ENCODE measurements at regions of chr5 and their contacts with region 1.

Region 1: DNA sequence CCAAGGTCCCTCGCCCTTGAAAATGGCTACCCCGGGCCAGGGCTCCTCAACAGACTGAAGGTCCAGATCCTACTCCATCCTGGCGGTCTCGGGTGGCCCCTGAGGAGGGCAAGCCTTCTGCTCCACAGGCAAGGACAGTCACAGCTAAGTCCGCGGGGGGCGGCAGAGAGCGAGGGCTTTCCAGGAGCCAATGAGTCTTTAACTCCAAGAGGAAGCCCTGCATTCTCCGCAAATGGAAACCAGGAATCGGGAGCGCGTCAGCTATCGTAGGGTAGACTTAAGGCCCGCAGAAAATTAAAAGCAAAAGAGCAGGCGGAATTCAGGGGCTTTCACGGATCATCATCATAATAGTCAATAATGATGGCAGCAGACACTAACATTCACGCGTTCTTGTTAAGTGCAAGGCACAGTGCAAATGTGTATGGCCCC is 87.8 kb upstream of the TNFAIP8 start:
- DNase-seq: peak; percentile 80 to 98
- H3K4me3 ChIP-seq: peak overlapping the region; percentile 84 to 87
- H3K27ac ChIP-seq: peak overlapping the region; percentile 93 to 96
- H3K4me1 ChIP-seq: peaks cover 0 to 15% of the 10 kb centered on the region in 2 donors
- H3K27me3 ChIP-seq: no peaks in the 10 kb centered on the region
- CTCF ChIP-seq: peak in 2 of 3 experiments; percentile 42 to 68

Region 2: GRCh38 chr5:119070828-119071572 is 197.0 kb before region 1 on chr5 and contains the start of gene DMXL1:
- intact Hi-C with region 1: loop called (anchors 2 kb)
- DNase-seq: peak; percentile 99 to 100
- H3K4me3 ChIP-seq: peak within 1 kb of the TSS; percentile 69 to 97
- H3K27ac ChIP-seq: peak within 1 kb of the TSS; percentile 96 to 99
- H3K4me1 ChIP-seq: peaks cover 0 to 26% of the 10 kb centered on the region in 2 donors
- H3K27me3 ChIP-seq: no peaks in the 10 kb centered on the region
- CTCF ChIP-seq: no peak
- total RNA-seq, gene DMXL1: 136 TPM

Region 3: GRCh38 chr5:119302916-119303897 is 35.2 kb after region 1 on chr5:
- intact Hi-C with region 1: loop called (anchors 1 kb)
- DNase-seq: peak in 1 of 2 donors; percentile 80
- H3K4me3 ChIP-seq: no peak overlapping the region
- H3K27ac ChIP-seq: peak overlapping the region; percentile 44 to 78
- H3K4me1 ChIP-seq: peaks cover 3 to 24% of the 10 kb centered on the region in 2 donors
- H3K27me3 ChIP-seq: no peaks in the 10 kb centered on the region
- CTCF ChIP-seq: no peak

Region 4: DNA sequence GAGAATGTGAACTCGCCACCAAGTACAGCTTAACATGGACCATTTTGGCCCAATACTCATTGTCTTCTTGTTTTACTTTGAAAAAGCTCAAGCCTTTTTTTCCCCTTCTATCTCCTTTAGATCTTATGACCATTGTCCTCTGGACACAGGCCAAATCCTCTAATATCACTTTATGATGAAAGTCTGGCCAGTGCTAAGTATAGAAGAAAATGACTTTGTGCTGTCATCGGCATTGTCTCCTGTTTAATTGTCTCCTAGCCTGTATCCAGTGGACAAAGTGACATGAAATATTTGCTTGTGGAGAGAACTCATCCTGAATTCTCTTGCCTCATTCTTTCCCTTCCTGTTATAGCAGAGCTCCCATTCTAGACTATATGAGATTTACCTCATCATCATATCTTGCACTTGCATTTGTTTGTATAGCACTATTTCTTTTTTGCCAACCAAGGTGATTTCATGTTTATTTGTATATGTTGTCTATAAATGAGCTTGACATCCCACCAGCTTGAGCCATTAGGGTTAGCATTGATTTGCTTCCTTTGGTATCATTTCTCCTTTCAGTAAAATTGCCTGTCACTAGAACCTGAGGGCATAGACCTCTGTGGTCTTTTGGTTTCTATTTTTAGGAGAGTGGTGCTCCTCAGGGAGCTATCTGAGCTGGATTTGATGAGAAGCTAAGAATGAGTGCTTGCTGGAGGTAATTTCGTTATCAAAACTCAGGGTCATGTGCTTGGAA is 69.0 kb after region 1 on chr5:
- intact Hi-C with region 1: loop called (anchors 1 kb)
- DNase-seq: no peak
- H3K4me3 ChIP-seq: no peak overlapping the region
- H3K27ac ChIP-seq: no peak overlapping the region
- H3K4me1 ChIP-seq: peaks cover 0 to 2% of the 10 kb centered on the region in 2 donors
- H3K27me3 ChIP-seq: no peaks in the 10 kb centered on the region
- CTCF ChIP-seq: no peak

Region 5: GRCh38 chr5:119411935-119412602 is 144.1 kb after region 1 on chr5:
- intact Hi-C with region 1: loop called (anchors 2 kb)
- DNase-seq: peak in 1 of 2 donors; percentile 76
- H3K4me3 ChIP-seq: peak overlapping the region; percentile 50 to 67
- H3K27ac ChIP-seq: peak overlapping the region; percentile 72 to 83
- H3K4me1 ChIP-seq: no peaks in the 10 kb centered on the region
- H3K27me3 ChIP-seq: no peaks in the 10 kb centered on the region
- CTCF ChIP-seq: peak; percentile 82 to 91 (median 86)

Measured in ascending aorta (tissue), 2 donors.